ENCODE measurements at regions of chr6 and their contacts with region 1.

Region 1: GRCh38 chr6:149934249-149935156 is 7.3 kb upstream of the ULBP2 start:
- DNase-seq: no peak
- H3K4me3 ChIP-seq: no peak overlapping the region
- H3K27ac ChIP-seq: no peak overlapping the region
- H3K4me1 ChIP-seq: peaks cover 11 to 19% (median 11%) of the 10 kb centered on the region in 3 donors
- H3K27me3 ChIP-seq: peaks cover 6 to 98% (median 21%) of the 10 kb centered on the region in 4 donors
- CTCF ChIP-seq: peak; percentile 83 to 89 (median 86)
- POLR2A ChIP-seq: no peak

Region 2: DNA sequence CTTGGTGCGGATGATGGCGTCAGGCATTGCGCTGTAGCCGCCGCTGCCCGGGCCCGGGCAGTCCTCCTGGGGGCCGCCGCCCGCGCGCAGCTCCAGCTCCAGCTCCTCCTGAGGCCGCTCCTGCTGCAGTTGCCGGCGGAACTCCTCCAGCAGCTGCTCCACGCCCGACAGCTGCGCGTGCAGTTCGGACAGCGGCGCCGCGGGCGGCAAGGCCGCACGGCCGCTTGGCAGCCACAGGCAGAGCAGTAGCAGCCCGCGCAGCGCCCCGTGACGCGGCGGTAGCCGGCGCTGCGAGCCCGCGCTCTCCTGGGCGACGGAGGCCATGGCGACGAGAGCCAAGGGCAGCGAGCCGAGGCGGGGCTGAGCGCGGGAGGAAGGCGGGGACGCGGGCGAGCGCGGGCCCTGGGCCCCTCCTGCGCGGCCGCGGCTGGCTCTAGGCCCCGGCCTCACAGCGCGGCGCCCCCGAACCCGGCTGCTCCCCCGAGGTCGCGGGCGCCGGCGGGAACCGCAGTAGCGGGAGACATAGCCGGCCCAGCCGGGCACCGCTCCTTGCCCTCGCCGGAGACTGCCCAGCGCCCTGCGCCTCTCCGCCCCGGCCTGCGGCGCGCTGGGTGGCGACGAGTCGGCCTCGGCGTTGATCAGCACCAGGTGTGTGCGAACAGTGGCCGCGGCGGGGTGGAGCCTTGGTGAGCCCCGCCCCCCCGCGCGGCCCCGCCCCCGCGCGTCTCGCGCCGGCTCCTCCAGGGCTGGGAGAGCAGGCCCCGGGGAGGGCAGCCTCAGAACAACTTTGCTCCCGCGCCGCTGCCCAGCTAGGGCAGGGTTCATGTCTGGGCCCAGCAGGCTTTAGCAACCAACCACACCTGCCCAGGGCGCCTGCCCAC is 70.6 kb before region 1 on chr6 and contains the start of gene LRP11:
- intact Hi-C with region 1: no loop called
- DNase-seq: peak; percentile 26
- H3K4me3 ChIP-seq: peak within 1 kb of the TSS; percentile 54 to 88 (median 76)
- H3K27ac ChIP-seq: peak within 1 kb of the TSS; percentile 94 to 99 (median 95)
- H3K4me1 ChIP-seq: peaks cover 17 to 56% (median 25%) of the 10 kb centered on the region in 3 donors
- H3K27me3 ChIP-seq: no peaks in the 10 kb centered on the region
- CTCF ChIP-seq: peak in 1 of 6 experiments; percentile 12
- POLR2A ChIP-seq: peak in 3 of 4 donors; percentile 53 to 84 (median 75)
- total RNA-seq, gene LRP11: 40.2 to 74.9 (median 58.4) TPM

Region 3: DNA sequence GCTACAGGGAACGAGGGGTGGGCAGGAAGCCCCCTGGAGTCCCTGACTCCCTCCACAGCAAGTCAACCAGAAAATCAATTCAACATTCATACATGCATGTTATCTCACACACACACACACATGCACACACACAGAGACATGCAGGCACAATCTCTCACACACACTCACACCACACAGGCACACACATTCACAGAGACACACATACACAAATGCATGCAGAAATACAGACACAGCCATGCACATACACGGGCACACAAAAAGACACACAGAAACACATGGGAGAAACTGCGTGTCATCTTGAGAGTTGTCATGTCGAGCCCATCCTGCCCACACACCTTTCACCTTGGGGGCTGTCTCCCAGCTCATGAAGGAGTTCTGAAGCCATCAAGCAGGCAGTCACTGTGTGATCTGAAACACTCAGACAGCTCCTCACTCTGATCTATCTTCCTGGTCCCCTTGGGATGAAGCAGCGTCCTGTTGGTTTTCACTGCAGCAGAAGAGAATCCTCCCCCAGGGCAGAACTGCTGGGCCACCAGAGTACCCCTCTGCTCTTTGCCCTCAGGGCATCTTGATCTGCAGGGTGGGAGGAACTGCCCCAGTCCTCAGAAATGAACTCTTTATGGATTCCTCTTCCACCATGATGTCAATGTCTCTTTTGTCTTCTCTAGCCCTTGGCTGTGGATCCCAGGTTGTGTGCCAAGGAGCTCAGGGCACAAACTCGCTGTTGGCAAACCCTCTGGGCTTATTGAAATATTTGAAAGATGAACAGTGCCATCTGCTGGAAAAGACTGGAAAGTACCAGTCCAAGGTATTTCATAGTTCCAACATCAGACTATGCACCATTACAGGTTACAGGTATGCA is 82.1 kb after region 1 on chr6:
- intact Hi-C with region 1: loop called (anchors 5 kb)
- DNase-seq: no peak
- H3K4me3 ChIP-seq: no peak overlapping the region
- H3K27ac ChIP-seq: no peak overlapping the region
- H3K4me1 ChIP-seq: peaks cover 6 to 27% (median 9%) of the 10 kb centered on the region in 3 donors
- H3K27me3 ChIP-seq: peaks cover 3 to 73% (median 14%) of the 10 kb centered on the region in 4 donors
- CTCF ChIP-seq: peak; percentile 64 to 80 (median 76)
- POLR2A ChIP-seq: no peak

Region 4: GRCh38 chr6:150403458-150404246 is 469.1 kb after region 1 on chr6:
- intact Hi-C with region 1: loop called (anchors 10 kb)
- DNase-seq: no peak
- H3K4me3 ChIP-seq: no peak overlapping the region
- H3K27ac ChIP-seq: no peak overlapping the region
- H3K4me1 ChIP-seq: peaks cover 0 to 13% (median 0%) of the 10 kb centered on the region in 3 donors
- H3K27me3 ChIP-seq: peaks cover 0 to 26% (median 0%) of the 10 kb centered on the region in 4 donors
- CTCF ChIP-seq: no peak
- POLR2A ChIP-seq: no peak

Measured in esophagus squamous epithelium (tissue), 5 donors.